ENCODE measurements at regions of chr9 and their contacts with region 1.

Region 1: DNA sequence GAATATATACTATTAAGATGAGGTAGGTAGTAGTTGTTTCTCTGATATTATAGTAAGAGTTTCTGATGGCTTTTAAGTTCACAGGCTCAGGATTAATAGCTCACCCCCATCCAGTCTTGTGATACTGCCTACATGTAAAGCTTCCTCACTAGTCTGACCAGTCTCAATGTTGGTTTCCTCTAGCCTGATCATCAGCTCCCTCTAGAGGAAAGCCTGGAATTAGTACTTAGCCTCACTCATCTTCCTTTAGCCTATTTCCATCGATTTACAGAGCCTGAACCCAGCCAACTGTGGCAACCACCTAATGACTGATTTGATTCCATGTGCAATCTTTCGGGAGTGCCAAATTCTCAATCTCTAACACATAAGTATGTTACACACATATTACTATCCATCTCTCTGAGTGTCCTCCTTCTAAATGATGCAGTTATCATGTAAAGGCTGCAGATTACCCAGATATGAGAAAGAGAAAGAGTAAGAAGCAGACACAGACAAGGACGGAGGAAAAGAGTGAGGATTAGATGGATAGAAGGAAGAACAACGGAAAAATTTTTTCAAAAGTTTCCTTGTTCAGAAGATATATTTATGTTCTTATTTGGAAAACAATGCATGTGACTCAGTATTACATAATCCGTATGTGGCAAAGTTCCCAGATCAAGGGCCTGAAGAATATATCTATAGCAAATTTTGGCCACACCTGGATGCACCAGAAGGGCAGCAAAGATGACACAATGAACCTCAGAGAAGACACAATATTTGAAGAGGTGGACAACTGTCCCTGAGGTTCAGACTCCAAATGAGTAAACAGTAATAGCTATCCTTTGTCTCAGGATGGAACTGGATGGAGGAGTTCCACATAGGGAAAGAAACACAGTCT is 333.7 kb downstream of the ELAVL2 start:
- DNase-seq: peak; percentile 89
- ATAC-seq: peak; percentile 94
- H3K4me3 ChIP-seq: peak overlapping the region; percentile 56
- H3K27ac ChIP-seq: peak overlapping the region; percentile 95
- H3K4me1 ChIP-seq: peaks cover 19% of the 10 kb centered on the region
- H3K27me3 ChIP-seq: no peaks in the 10 kb centered on the region
- CTCF ChIP-seq: peak; percentile 83

Region 2: DNA sequence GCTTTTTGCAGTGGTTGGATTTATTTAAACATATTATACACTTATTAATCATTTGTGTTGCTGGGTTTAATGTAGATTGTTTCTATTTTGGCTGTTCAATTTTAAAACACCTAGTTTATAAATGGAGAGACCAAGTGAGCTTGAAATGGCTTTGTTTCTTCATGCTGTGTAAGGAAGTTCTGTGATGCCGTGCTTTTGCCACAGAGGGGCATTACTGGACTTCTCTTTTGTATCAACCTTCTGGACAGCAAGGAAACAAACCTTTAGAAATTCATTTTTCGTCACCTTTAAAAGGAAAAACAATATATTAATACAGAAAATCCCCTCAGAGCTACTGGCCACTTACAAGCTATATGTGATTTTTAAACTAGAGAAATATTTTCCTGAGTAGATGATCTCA is 963.9 kb before region 1 on chr9:
- CTCF ChIA-PET with region 1: interaction called, 3 read pairs
- POLR2A ChIA-PET with region 1: no interaction called
- intact Hi-C with region 1: loop called (anchors 10 kb)
- DNase-seq: peak; percentile 53
- ATAC-seq: no peak
- H3K4me3 ChIP-seq: no peak overlapping the region
- H3K27ac ChIP-seq: no peak overlapping the region
- H3K4me1 ChIP-seq: peaks cover 13% of the 10 kb centered on the region
- H3K27me3 ChIP-seq: no peaks in the 10 kb centered on the region
- CTCF ChIP-seq: peak; percentile 70

Region 3: DNA sequence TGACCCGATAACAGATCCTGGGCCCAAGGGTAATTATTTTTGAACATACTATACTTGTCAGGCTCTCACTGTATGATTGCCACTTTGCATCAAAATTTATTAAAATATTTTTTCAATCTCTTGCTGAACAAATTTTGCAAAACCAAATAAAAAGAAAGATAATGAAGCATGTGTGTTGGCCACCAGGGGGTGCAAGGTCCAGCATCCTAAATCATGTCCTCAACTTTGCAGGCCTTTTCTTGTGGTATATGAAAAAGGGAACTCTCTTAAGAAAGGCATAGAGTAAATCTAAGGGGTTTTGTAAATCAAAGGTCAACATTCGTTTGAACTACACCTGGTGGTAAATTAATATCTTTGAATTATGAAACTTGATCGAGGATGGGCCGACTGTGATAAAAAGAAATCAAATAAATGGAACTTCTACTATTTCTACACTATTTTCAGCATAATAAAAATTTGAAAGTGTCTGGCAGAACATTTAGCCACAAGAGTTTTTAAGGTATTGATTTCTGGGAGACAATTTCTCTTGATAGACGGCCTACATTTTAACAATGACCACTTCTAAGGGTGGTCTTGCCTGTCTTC is 369.2 kb before region 1 on chr9:
- CTCF ChIA-PET with region 1: interaction called, 3 read pairs
- POLR2A ChIA-PET with region 1: no interaction called
- intact Hi-C with region 1: loop called (anchors 1 kb)
- DNase-seq: peak; percentile 52
- ATAC-seq: no peak; the same call in 1 of the 2 replicates
- H3K4me3 ChIP-seq: no peak overlapping the region
- H3K27ac ChIP-seq: no peak overlapping the region
- H3K4me1 ChIP-seq: no peaks in the 10 kb centered on the region
- H3K27me3 ChIP-seq: no peaks in the 10 kb centered on the region
- CTCF ChIP-seq: peak; percentile 78

Region 4: GRCh38 chr9:23342291-23342690 is 150.1 kb before region 1 on chr9:
- CTCF ChIA-PET with region 1: no interaction called
- POLR2A ChIA-PET with region 1: no interaction called
- intact Hi-C with region 1: loop called (anchors 10 kb)
- DNase-seq: peak; percentile 67
- ATAC-seq: peak; percentile 91
- H3K4me3 ChIP-seq: peak overlapping the region; percentile 30; the same call in 1 of the 2 replicates
- H3K27ac ChIP-seq: no peak overlapping the region
- H3K4me1 ChIP-seq: peaks cover 24% of the 10 kb centered on the region
- H3K27me3 ChIP-seq: no peaks in the 10 kb centered on the region
- CTCF ChIP-seq: no peak

Region 5: DNA sequence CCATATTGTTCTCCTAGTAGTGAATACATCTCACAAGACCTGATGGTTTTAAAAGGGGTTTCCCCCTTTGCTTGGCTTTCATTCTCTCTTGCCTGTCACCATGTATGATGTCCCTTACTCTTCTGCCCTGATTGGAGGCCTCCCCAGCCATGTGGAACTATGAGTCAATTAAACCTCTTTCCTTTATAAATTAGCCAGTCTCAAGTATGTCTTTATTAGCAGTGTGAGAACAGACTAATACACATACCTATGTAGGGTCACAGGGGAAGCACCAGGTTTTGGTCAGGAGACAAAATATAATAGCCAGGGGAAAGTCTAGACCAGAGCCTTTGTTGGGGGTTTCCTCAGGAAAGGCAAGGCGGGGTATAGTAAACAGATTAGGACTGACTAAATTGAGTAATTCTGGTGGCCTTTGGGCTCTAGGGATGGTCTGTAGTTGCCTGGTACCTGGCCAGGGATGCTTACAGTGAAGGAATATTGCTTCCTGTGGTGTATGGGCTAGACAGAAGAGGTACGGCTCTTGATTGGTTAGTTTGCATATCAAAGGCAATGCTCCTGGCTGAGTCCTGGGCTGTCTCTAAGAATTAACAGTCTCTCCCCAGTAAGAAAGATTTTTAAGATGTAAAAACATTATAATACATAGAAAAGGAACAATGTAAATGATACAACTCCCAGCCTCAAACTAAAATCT is 79.2 kb after region 1 on chr9:
- CTCF ChIA-PET with region 1: no interaction called
- POLR2A ChIA-PET with region 1: no interaction called
- intact Hi-C with region 1: no loop called
- DNase-seq: no peak
- ATAC-seq: no peak
- H3K4me3 ChIP-seq: no peak overlapping the region
- H3K27ac ChIP-seq: no peak overlapping the region
- H3K4me1 ChIP-seq: no peaks in the 10 kb centered on the region
- H3K27me3 ChIP-seq: no peaks in the 10 kb centered on the region
- CTCF ChIP-seq: no peak

Region 6: DNA sequence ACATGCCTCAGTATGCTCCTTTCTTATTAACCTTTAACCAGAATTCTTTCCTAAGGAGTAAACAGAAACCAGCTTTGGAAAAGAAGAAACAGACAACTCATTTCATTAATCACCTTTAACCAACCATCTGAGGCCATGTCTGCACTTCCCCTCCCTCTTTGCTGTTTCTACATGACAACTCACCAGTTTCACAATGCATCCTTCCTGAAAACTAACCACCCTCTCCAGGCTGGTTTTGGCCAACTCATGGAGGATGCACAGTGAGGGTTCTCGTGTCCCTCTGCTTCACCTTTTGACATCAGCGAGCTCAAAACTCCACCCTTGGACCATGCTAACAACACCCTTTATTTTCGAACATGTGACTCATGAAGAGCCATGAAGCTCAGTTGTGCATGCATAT is 89.6 kb after region 1 on chr9:
- CTCF ChIA-PET with region 1: no interaction called
- POLR2A ChIA-PET with region 1: no interaction called
- intact Hi-C with region 1: loop called (anchors 1 kb)
- DNase-seq: peak; percentile 93
- ATAC-seq: peak; percentile 70
- H3K4me3 ChIP-seq: no peak overlapping the region
- H3K27ac ChIP-seq: peak overlapping the region; percentile 100
- H3K4me1 ChIP-seq: peaks cover 47% of the 10 kb centered on the region
- H3K27me3 ChIP-seq: no peaks in the 10 kb centered on the region
- CTCF ChIP-seq: no peak

Region 7: DNA sequence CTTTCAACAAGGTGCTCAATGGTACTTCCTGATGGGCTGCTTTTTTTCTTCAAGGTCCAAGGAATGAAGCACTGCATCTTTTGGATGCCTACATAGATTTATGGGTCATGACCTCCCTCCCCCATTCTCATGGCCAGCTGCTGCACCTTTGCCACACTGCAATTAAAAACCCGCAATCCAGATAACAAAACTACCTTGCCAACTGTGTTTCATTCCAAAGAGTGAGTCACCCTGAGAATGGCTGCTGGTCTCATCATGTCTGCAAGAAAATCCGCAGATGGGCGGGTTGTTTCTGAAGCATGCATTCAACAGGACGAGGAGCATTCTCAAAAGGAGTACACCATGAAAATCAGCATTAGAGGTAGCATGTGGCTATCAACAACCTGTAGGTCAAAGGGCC is 193.9 kb after region 1 on chr9:
- CTCF ChIA-PET with region 1: no interaction called
- POLR2A ChIA-PET with region 1: no interaction called
- intact Hi-C with region 1: loop called (anchors 5 kb)
- DNase-seq: peak; percentile 92
- ATAC-seq: peak; percentile 69
- H3K4me3 ChIP-seq: no peak overlapping the region
- H3K27ac ChIP-seq: peak overlapping the region; percentile 92
- H3K4me1 ChIP-seq: peaks cover 50% of the 10 kb centered on the region
- H3K27me3 ChIP-seq: no peaks in the 10 kb centered on the region
- CTCF ChIP-seq: no peak

Region 8: GRCh38 chr9:23702311-23702922 is 210.1 kb after region 1 on chr9:
- CTCF ChIA-PET with region 1: no interaction called
- POLR2A ChIA-PET with region 1: interaction called, 3 read pairs
- intact Hi-C with region 1: loop called (anchors 1 kb)
- DNase-seq: peak; percentile 71
- ATAC-seq: peak; percentile 44
- H3K4me3 ChIP-seq: no peak overlapping the region
- H3K27ac ChIP-seq: peak overlapping the region; percentile 52
- H3K4me1 ChIP-seq: peaks cover 58% of the 10 kb centered on the region
- H3K27me3 ChIP-seq: no peaks in the 10 kb centered on the region
- CTCF ChIP-seq: peak; percentile 70